Activated CD4-positive, alpha-beta memory T cell treated with anti-CD3 and anti-CD28 coated beads, Interleukin-2, amount 10 ng/mL, durations not matched to agents 7 days and 5 days (primary cell): ENCODE measurements at regions of chr12 and their contacts with region 1.

Region 1: GRCh38 chr12:130013771-130014484 is 110.1 kb upstream of the TMEM132D start:
- DNase-seq: peak; percentile 28
- H3K4me3 Mint-ChIP-seq: no peak overlapping the region
- H3K27ac Mint-ChIP-seq: no peak overlapping the region
- H3K4me1 Mint-ChIP-seq: no peaks in the 10 kb centered on the region
- H3K27me3 Mint-ChIP-seq: no peaks in the 10 kb centered on the region

Region 2: DNA sequence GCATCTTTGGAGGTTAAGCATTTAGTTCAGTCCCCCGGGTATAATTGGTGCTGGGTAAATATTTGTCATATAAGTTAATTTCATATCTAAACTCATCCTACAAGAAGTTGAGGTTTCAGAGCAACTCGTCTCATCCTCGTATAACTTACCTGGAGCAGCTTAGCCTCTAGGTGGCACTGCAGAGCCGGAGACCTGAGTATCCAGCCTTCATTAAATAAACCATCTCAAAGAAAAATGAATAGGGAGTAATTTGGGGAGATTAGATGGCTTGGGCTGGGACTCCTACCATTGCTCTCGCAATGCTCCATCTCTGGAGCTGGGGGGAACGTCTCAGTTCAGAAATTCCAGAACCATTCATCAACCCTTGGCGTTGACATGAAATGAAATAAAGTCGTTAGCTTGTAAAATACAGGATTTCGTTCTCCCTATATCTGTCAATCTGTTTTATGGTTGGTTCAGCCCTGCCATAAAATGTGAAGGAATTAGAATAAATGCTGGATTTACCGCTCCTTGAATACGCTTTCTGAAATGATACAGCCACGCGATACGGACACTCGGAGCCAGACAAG is 12.8 kb after region 1 on chr12:
- CTCF ChIA-PET with region 1: interaction called, 33 read pairs
- POLR2A ChIA-PET with region 1: no interaction called
- DNase-seq: peak; percentile 29
- H3K4me3 Mint-ChIP-seq: no peak overlapping the region
- H3K27ac Mint-ChIP-seq: no peak overlapping the region
- H3K4me1 Mint-ChIP-seq: no peaks in the 10 kb centered on the region
- H3K27me3 Mint-ChIP-seq: no peaks in the 10 kb centered on the region